T-cell (primary cell): ENCODE measurements at regions of chr3 and their contacts with region 1.

Region 1: GRCh38 chr3:122484985-122485384 is 29.8 kb downstream of the KPNA1 start:
- DNase-seq: no peak
- ATAC-seq: no peak
- H3K4me3 ChIP-seq: no peak overlapping the region
- H3K4me3 Mint-ChIP-seq: no peak overlapping the region
- H3K27ac ChIP-seq: no peak overlapping the region
- H3K27ac Mint-ChIP-seq: no peak overlapping the region
- H3K4me1 ChIP-seq: peaks cover 0 to 2% of the 10 kb centered on the region in 2 experiments
- H3K4me1 Mint-ChIP-seq: peaks cover 51 to 54% (median 53%) of the 10 kb centered on the region in 3 donors
- H3K27me3 ChIP-seq: no peaks in the 10 kb centered on the region
- H3K27me3 Mint-ChIP-seq: no peaks in the 10 kb centered on the region

Region 2: DNA sequence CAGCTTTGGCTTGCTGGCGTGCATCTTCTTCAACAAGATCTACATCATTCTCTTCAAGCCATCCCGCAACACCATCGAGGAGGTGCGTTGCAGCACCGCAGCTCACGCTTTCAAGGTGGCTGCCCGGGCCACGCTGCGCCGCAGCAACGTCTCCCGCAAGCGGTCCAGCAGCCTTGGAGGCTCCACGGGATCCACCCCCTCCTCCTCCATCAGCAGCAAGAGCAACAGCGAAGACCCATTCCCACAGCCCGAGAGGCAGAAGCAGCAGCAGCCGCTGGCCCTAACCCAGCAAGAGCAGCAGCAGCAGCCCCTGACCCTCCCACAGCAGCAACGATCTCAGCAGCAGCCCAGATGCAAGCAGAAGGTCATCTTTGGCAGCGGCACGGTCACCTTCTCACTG is 200.5 kb before region 1 on chr3:
- CTCF ChIA-PET with region 1: no interaction called
- POLR2A ChIA-PET with region 1: no interaction called
- DNase-seq: no peak
- ATAC-seq: no peak
- H3K4me3 ChIP-seq: no peak overlapping the region
- H3K4me3 Mint-ChIP-seq: no peak overlapping the region
- H3K27ac ChIP-seq: no peak overlapping the region
- H3K27ac Mint-ChIP-seq: no peak overlapping the region
- H3K4me1 ChIP-seq: peaks cover 0 to 5% of the 10 kb centered on the region in 2 experiments
- H3K4me1 Mint-ChIP-seq: peaks cover 0 to 6% (median 5%) of the 10 kb centered on the region in 3 donors
- H3K27me3 ChIP-seq: peaks cover 0 to 10% of the 10 kb centered on the region in 2 experiments
- H3K27me3 Mint-ChIP-seq: peaks cover 2 to 11% of the 10 kb centered on the region in 2 donors

Region 3: GRCh38 chr3:122403489-122403888 is 81.5 kb before region 1 on chr3:
- CTCF ChIA-PET with region 1: no interaction called
- POLR2A ChIA-PET with region 1: interaction called in 1 of 2 experiments, 14 read pairs
- DNase-seq: no peak
- ATAC-seq: no peak
- H3K4me3 ChIP-seq: no peak overlapping the region
- H3K4me3 Mint-ChIP-seq: no peak overlapping the region
- H3K27ac ChIP-seq: no peak overlapping the region
- H3K27ac Mint-ChIP-seq: no peak overlapping the region
- H3K4me1 ChIP-seq: no peaks in the 10 kb centered on the region
- H3K4me1 Mint-ChIP-seq: peaks cover 0 to 9% (median 2%) of the 10 kb centered on the region in 3 donors
- H3K27me3 ChIP-seq: no peaks in the 10 kb centered on the region
- H3K27me3 Mint-ChIP-seq: no peaks in the 10 kb centered on the region